ENCODE measurements at regions of chr16 and their contacts with region 1.

Region 1: GRCh38 chr16:82169861-82170845 is at the start of gene MPHOSPH6:
- DNase-seq: peak; percentile 88
- ATAC-seq: peak; percentile 95
- H3K4me3 Mint-ChIP-seq: peak within 1 kb of the TSS; percentile 96
- H3K27ac Mint-ChIP-seq: peak within 1 kb of the TSS; percentile 91
- H3K4me1 Mint-ChIP-seq: peaks cover 19% of the 10 kb centered on the region
- H3K27me3 Mint-ChIP-seq: peaks cover 14% of the 10 kb centered on the region
- CTCF ChIP-seq: no peak
- total RNA-seq, gene MPHOSPH6: 22.2 and 31.6 TPM in 2 replicates

Region 2: GRCh38 chr16:80540516-80541272 is 1629.5 kb before region 1 on chr16 and contains the start of gene DYNLRB2:
- CTCF ChIA-PET with region 1: no interaction called
- POLR2A ChIA-PET with region 1: no interaction called
- intact Hi-C with region 1: loop called (anchors 5 kb)
- DNase-seq: peak; percentile 90
- ATAC-seq: peak; percentile 92
- H3K4me3 Mint-ChIP-seq: peak within 1 kb of the TSS; percentile 96
- H3K27ac Mint-ChIP-seq: peak within 1 kb of the TSS; percentile 96
- H3K4me1 Mint-ChIP-seq: peaks cover 16% of the 10 kb centered on the region
- H3K27me3 Mint-ChIP-seq: peaks cover 7% of the 10 kb centered on the region
- CTCF ChIP-seq: no peak
- total RNA-seq, gene DYNLRB2: 0.71 TPM in 1 of 2 replicates, not detected in the other

Region 3: GRCh38 chr16:81095953-81096717 is 1074.0 kb before region 1 on chr16 and contains the start of gene GCSH:
- CTCF ChIA-PET with region 1: no interaction called
- POLR2A ChIA-PET with region 1: no interaction called
- intact Hi-C with region 1: loop called (anchors 5 kb)
- DNase-seq: peak; percentile 97
- ATAC-seq: peak; percentile 97
- H3K4me3 Mint-ChIP-seq: peak within 1 kb of the TSS; percentile 83
- H3K27ac Mint-ChIP-seq: peak within 1 kb of the TSS; percentile 50
- H3K4me1 Mint-ChIP-seq: peaks cover 18% of the 10 kb centered on the region
- H3K27me3 Mint-ChIP-seq: no peaks in the 10 kb centered on the region
- CTCF ChIP-seq: no peak
- total RNA-seq, gene GCSH: 8.4 and 8.8 TPM in 2 replicates

Region 4: DNA sequence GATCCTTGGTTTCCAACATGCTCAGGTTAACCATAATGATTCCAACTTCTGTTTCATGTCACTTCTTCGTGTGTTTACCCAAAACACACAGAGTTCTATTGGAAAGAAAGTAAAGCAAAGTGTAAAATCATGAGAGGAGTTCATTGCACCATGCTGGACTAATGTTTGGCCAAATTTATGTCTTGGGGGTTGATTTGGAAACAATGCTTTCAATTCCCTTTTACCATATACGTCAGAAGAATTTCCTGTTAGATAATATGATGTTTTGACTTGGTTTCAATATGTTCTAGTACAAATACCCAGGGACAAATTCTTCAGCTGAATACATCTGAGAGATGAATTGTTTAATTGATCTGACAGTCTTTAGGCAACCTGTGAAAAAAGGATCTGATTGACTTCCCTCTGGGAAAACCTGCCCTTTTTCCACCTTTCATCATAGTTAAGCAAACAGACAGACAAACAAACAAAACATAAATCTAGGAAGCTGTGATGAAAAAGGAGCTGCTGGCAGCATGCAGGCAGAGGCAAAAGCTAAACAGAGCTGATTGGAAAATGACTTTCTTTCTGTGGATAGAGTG is 25.9 kb after region 1 on chr16:
- CTCF ChIA-PET with region 1: no interaction called
- POLR2A ChIA-PET with region 1: no interaction called
- intact Hi-C with region 1: loop called (anchors 2 kb)
- DNase-seq: no peak
- ATAC-seq: no peak
- H3K4me3 Mint-ChIP-seq: no peak overlapping the region
- H3K27ac Mint-ChIP-seq: no peak overlapping the region
- H3K4me1 Mint-ChIP-seq: peaks cover 12% of the 10 kb centered on the region
- H3K27me3 Mint-ChIP-seq: peaks cover 4% of the 10 kb centered on the region
- CTCF ChIP-seq: no peak

Region 5: GRCh38 chr16:82240111-82240510 is 70.0 kb after region 1 on chr16:
- CTCF ChIA-PET with region 1: no interaction called
- POLR2A ChIA-PET with region 1: no interaction called
- intact Hi-C with region 1: no loop called
- DNase-seq: no peak
- ATAC-seq: no peak
- H3K4me3 Mint-ChIP-seq: no peak overlapping the region
- H3K27ac Mint-ChIP-seq: no peak overlapping the region
- H3K4me1 Mint-ChIP-seq: no peaks in the 10 kb centered on the region
- H3K27me3 Mint-ChIP-seq: peaks cover 26% of the 10 kb centered on the region
- CTCF ChIP-seq: no peak

Region 6: GRCh38 chr16:82506692-82507670 is 336.8 kb after region 1 on chr16:
- CTCF ChIA-PET with region 1: no interaction called
- POLR2A ChIA-PET with region 1: no interaction called
- intact Hi-C with region 1: no loop called
- DNase-seq: no peak
- ATAC-seq: no peak
- H3K4me3 Mint-ChIP-seq: no peak overlapping the region
- H3K27ac Mint-ChIP-seq: no peak overlapping the region
- H3K4me1 Mint-ChIP-seq: no peaks in the 10 kb centered on the region
- H3K27me3 Mint-ChIP-seq: no peaks in the 10 kb centered on the region
- CTCF ChIP-seq: no peak

Measured in activated B cell treated with CpG ODN at 0.5 μM for 24 hours (primary cell).